Ascending aorta (tissue), 2 donors: ENCODE measurements at regions of chr14 and their contacts with region 1.

Region 1: GRCh38 chr14:32076278-32077080 is 625 bp upstream of the ARHGAP5 start:
- DNase-seq: peak; percentile 78 to 98
- H3K4me3 ChIP-seq: peak overlapping the region; percentile 64 to 82
- H3K27ac ChIP-seq: peak overlapping the region; percentile 92 to 97
- H3K4me1 ChIP-seq: peaks cover 0 to 30% of the 10 kb centered on the region in 2 donors
- H3K27me3 ChIP-seq: no peaks in the 10 kb centered on the region
- CTCF ChIP-seq: no peak

Region 2: DNA sequence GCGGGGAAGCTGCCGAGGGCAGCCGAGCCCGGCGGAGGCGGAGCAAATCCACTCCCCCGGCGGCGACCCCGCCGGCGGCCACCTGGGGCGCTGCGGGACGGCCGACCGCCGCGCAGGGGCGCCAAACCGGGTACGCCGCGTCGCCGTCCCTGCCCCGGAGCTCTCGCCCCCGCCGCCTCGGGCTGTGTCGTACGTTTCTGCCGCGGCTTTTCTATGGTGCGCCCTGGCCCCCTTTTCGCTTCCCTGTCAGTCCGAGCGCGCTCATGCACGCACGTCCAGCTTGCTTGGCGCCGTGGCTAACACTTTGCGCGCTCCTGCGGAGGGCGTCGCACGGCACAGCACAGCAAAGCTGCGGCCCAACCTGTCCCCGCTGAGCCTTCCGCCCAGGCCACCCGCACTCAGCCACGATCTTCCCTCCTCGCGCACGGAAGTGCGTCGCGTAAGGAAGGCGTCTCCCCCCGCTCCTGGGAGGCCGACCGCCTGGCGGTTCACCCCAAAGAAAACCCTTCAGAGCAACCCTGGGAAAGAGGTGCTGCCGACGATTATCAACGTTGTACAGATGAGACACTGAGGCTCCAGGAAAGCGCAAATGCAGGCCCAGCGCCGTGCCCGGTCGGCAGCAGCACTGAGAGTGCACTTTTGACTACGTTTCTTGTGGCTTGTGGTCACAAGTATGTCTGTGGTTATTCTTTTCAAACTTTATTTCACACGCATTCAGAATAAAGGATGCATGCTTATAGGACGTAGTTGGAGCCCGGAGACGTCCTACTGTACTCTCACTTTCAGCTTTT is 868.5 kb before region 1 on chr14 and contains the start of gene HECTD1:
- intact Hi-C with region 1: loop called (anchors 5 kb)
- DNase-seq: peak; percentile 15 to 93
- H3K4me3 ChIP-seq: peak within 1 kb of the TSS; percentile 82 to 98
- H3K27ac ChIP-seq: peak within 1 kb of the TSS; percentile 98 to 100
- H3K4me1 ChIP-seq: peaks cover 7 to 22% of the 10 kb centered on the region in 2 donors
- H3K27me3 ChIP-seq: no peaks in the 10 kb centered on the region
- CTCF ChIP-seq: peak; percentile 22 to 89 (median 37)
- total RNA-seq, gene HECTD1: 63.6 TPM

Region 3: DNA sequence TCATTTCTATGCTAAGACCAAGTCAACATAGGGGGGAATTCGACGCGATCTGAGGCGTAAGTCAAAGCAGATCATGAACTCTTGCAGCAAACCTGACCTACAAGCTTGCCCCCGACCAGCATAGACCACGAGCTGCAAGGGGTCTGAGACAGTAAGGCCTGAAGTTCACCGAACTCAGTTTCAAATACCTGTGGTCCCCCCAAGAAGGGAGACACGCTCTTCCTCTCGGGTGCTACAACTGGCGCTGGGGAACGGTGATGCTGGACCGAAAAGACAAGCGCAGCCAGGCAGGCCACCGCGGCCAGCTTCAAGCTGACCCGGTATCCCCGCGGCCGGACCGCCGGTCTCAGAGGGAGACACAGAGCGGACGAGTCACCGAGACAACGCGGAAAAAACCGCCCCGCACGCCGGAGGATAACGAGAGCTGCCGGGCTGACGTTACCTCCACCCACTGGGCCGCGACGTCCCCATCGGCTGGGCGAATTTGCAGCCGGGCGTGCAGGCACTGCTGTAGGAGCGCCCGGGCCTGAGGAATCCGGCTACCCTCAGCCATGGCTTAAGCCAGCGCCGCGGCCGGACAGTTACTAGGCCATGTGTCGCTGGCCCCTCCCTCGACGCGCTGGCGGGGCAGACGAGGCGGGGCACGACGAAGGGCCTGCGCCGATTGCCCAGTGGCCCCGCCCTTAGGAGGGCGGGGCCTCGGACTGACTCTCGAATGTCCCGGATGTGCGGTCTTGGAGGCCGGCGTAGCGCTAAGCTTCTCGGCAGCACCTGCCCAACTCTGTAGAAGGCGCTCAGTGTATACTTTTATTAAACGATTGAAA is 619.4 kb before region 1 on chr14 and contains the start of gene DTD2:
- intact Hi-C with region 1: loop called (anchors 2 kb)
- DNase-seq: peak; percentile 75 to 97
- H3K4me3 ChIP-seq: peak within 1 kb of the TSS; percentile 72 to 74
- H3K27ac ChIP-seq: peak within 1 kb of the TSS; percentile 87 to 90
- H3K4me1 ChIP-seq: peaks cover 4 to 6% of the 10 kb centered on the region in 2 donors
- H3K27me3 ChIP-seq: no peaks in the 10 kb centered on the region
- CTCF ChIP-seq: no peak
- total RNA-seq, gene DTD2: 120 TPM

Region 4: GRCh38 chr14:32202998-32203882 is 126.8 kb after region 1 on chr14 and contains the start of gene RNU6-8:
- intact Hi-C with region 1: loop called (anchors 1 kb)
- DNase-seq: peak; percentile 40 to 91
- H3K4me3 ChIP-seq: peak within 1 kb of the TSS; percentile 72 to 75
- H3K27ac ChIP-seq: peak within 1 kb of the TSS; percentile 69 to 75
- H3K4me1 ChIP-seq: no peaks in the 10 kb centered on the region
- H3K27me3 ChIP-seq: no peaks in the 10 kb centered on the region
- CTCF ChIP-seq: no peak
- total RNA-seq, gene RNU6-8: not detected

Region 5: GRCh38 chr14:32469388-32470160 is 393.1 kb after region 1 on chr14:
- intact Hi-C with region 1: loop called (anchors 5 kb)
- DNase-seq: no peak
- H3K4me3 ChIP-seq: no peak overlapping the region
- H3K27ac ChIP-seq: peak overlapping the region; percentile 65 to 83
- H3K4me1 ChIP-seq: peaks cover 5 to 35% of the 10 kb centered on the region in 2 donors
- H3K27me3 ChIP-seq: no peaks in the 10 kb centered on the region
- CTCF ChIP-seq: peak; percentile 23 to 59 (median 51)

Region 6: DNA sequence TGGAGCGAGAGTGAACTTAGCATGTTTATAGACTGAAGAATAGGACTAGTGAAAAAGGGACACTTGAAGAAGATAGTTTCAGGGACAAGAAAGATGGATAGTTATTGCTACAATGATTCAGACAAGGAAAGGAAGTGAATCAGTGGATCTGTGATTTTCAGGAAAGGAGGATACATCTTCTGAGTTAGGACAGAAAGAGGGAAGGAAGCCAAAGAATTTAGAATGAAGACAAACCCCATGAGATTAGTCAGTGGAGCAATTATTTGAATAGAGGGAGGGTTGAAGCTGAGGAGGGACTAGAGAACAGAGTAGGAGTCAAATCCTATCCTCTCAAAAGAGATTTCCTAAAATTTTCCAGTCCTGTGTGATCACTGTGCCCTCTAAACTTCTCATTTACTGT is 535.3 kb after region 1 on chr14:
- intact Hi-C with region 1: no loop called
- DNase-seq: no peak
- H3K4me3 ChIP-seq: no peak overlapping the region
- H3K27ac ChIP-seq: peak overlapping the region; percentile 41 to 52
- H3K4me1 ChIP-seq: peaks cover 3 to 20% of the 10 kb centered on the region in 2 donors
- H3K27me3 ChIP-seq: no peaks in the 10 kb centered on the region
- CTCF ChIP-seq: no peak

Region 7: GRCh38 chr14:32939254-32940065 is 863.0 kb after region 1 on chr14:
- intact Hi-C with region 1: loop called (anchors 10 kb)
- DNase-seq: peak in 1 of 2 donors; percentile 86
- H3K4me3 ChIP-seq: peak overlapping the region; percentile 72 to 80
- H3K27ac ChIP-seq: peak overlapping the region; percentile 81 to 94
- H3K4me1 ChIP-seq: peaks cover 3 to 10% of the 10 kb centered on the region in 2 donors
- H3K27me3 ChIP-seq: no peaks in the 10 kb centered on the region
- CTCF ChIP-seq: no peak